ENCODE measurements at regions of chr13 and their contacts with region 1.

Region 1: GRCh38 chr13:42594970-42595571 is 21.1 kb downstream of the TNFSF11 start:
- DNase-seq: peak; percentile 46
- ATAC-seq: peak; percentile 91
- H3K4me3 ChIP-seq: no peak overlapping the region
- H3K27ac ChIP-seq: no peak overlapping the region
- H3K4me1 ChIP-seq: no peaks in the 10 kb centered on the region; the same call in 1 of the 2 replicates
- H3K27me3 ChIP-seq: no peaks in the 10 kb centered on the region
- CTCF ChIP-seq: peak; percentile 60 to 86 (median 76)
- EP300 ChIP-seq: no peak
- POLR2A ChIP-seq: no peak
- RAD21 ChIP-seq: peak; percentile 95

Region 2: GRCh38 chr13:42181381-42181953 is 413.6 kb before region 1 on chr13:
- CTCF ChIA-PET with region 1: no interaction called
- POLR2A ChIA-PET with region 1: no interaction called
- RAD21 ChIA-PET with region 1: no interaction called
- SMC1A ChIA-PET with region 1: no interaction called
- in situ Hi-C with region 1: no loop called
- intact Hi-C with region 1: no loop called
- DNase-seq: no peak
- ATAC-seq: no peak
- H3K4me3 ChIP-seq: no peak overlapping the region
- H3K27ac ChIP-seq: no peak overlapping the region
- H3K4me1 ChIP-seq: no peaks in the 10 kb centered on the region
- H3K27me3 ChIP-seq: no peaks in the 10 kb centered on the region
- CTCF ChIP-seq: no peak
- EP300 ChIP-seq: no peak
- POLR2A ChIP-seq: no peak
- RAD21 ChIP-seq: no peak

Region 3: DNA sequence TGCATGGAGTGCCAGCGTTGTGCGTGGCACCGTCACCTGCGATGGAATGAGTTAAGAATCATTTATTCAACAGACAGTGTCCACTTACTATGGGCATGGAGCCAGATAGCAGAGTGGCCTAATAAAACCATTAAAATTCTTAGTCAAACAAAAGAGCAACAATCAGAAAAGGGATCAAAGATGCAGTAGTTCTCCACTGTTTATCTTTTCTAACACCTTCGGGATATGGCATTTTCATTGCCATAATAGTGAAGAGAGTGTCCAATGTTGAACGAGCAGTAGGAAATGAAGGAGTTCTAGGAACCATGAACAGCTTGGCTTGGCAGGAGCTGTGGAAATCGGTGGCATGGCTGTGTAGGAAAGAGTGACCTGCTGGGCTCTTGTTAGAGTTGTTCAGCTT is 19.1 kb before region 1 on chr13:
- CTCF ChIA-PET with region 1: interaction called, 25 read pairs
- POLR2A ChIA-PET with region 1: no interaction called
- RAD21 ChIA-PET with region 1: interaction called, 8 read pairs
- SMC1A ChIA-PET with region 1: interaction called, 6 read pairs
- in situ Hi-C with region 1: no loop called
- intact Hi-C with region 1: no loop called
- DNase-seq: no peak
- ATAC-seq: no peak
- H3K4me3 ChIP-seq: peak overlapping the region; percentile 74
- H3K27ac ChIP-seq: peak overlapping the region; percentile 74; the same call in 1 of the 2 replicates
- H3K4me1 ChIP-seq: peaks cover 4% of the 10 kb centered on the region; the same call in 1 of the 2 replicates
- H3K27me3 ChIP-seq: no peaks in the 10 kb centered on the region
- CTCF ChIP-seq: no peak
- EP300 ChIP-seq: no peak
- POLR2A ChIP-seq: no peak
- RAD21 ChIP-seq: no peak

Region 4: GRCh38 chr13:42875475-42876269 is 280.6 kb after region 1 on chr13:
- CTCF ChIA-PET with region 1: interaction called, 6 read pairs
- POLR2A ChIA-PET with region 1: no interaction called
- RAD21 ChIA-PET with region 1: interaction called, 7 read pairs
- SMC1A ChIA-PET with region 1: interaction called, 4 read pairs
- in situ Hi-C with region 1: no loop called
- intact Hi-C with region 1: loop called (anchors 5 kb)
- DNase-seq: no peak
- ATAC-seq: peak; percentile 46; the same call in 2 of the 3 replicates
- H3K4me3 ChIP-seq: no peak overlapping the region
- H3K27ac ChIP-seq: peak overlapping the region; percentile 76
- H3K4me1 ChIP-seq: peaks cover 14% of the 10 kb centered on the region
- H3K27me3 ChIP-seq: no peaks in the 10 kb centered on the region
- CTCF ChIP-seq: peak; percentile 3 to 9 (median 4); a peak in 1 of 6 replicates
- EP300 ChIP-seq: no peak
- POLR2A ChIP-seq: no peak
- RAD21 ChIP-seq: peak; percentile 40

Region 5: DNA sequence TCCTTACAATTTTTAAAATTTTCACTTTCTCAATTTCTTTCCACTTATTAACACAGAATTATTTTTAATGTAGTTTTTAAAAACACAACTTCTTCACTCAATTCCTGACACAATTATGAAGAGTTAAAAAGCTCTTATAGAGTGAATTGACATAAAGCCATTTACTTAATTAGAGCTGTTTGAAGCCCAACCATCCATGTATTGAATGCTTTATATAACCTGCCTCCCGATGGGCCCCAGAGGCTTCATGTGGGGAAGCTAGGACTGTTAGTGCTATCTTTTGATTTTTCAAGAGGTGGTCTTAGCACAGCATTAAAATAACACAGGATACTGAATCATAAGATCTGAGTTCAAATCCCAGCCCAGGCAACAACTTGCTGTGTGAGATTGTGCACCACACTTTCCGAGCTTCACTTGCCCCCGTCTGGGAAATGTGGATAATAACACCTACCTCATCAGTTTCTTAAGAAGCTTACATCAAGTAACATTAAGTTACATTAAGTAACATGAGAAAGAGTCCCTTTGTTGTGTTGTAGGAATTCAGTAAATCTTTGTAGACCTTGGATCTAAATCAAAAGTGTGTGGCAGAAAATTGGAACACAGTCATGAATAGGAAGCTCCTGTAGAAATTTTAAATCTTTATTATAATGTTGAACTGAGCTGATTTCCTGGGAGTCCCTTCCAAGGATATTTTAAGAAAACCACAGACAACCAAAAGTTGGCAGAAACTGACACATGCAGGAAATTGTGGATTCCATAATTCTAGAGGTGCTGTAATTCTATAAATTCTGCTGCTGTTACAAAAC is 1197.2 kb after region 1 on chr13:
- CTCF ChIA-PET with region 1: interaction called, 3 read pairs
- POLR2A ChIA-PET with region 1: no interaction called
- RAD21 ChIA-PET with region 1: no interaction called
- SMC1A ChIA-PET with region 1: no interaction called
- in situ Hi-C with region 1: loop called (anchors 10 kb)
- intact Hi-C with region 1: no loop called
- DNase-seq: no peak
- ATAC-seq: no peak
- H3K4me3 ChIP-seq: no peak overlapping the region
- H3K27ac ChIP-seq: no peak overlapping the region
- H3K4me1 ChIP-seq: no peaks in the 10 kb centered on the region
- H3K27me3 ChIP-seq: peaks cover 2% of the 10 kb centered on the region in 2 experiments; a peak in 3 of 4 replicates
- CTCF ChIP-seq: no peak
- EP300 ChIP-seq: no peak
- POLR2A ChIP-seq: no peak
- RAD21 ChIP-seq: no peak

Measured in GM12878 (cell line).